Colonic mucosa (tissue), 4 donors: ENCODE measurements at regions of chr1 and their contacts with region 1.

Region 1: GRCh38 chr1:227357171-227357880 is 39.0 kb upstream of the CDC42BPA start:
- DNase-seq: peak; percentile 62
- H3K4me3 ChIP-seq: no peak overlapping the region
- H3K27ac ChIP-seq: peak overlapping the region; percentile 14
- H3K4me1 ChIP-seq: peaks cover 3% of the 10 kb centered on the region
- H3K27me3 ChIP-seq: no peaks in the 10 kb centered on the region
- CTCF ChIP-seq: no peak

Region 2: DNA sequence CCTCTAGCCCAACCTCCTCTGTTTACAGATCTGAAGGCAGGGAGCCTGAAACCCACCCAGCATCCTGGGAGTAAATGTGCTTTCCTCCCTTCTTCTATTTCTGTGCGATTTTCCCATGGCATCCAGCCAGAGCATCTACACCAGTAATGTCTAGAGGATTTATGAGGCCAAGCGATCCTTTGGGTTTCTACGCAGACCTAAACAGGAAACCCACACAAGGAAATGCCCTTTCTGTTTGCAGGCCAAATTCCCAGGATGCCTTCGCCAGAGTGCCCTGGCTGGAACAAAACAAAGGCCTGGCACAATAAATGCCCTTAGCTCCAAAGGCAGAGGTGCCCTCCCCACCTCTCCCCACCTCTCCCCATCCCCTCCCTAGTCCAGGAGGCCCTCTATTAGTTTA is 71.5 kb after region 1 on chr1:
- intact Hi-C with region 1: loop called (anchors 10 kb)
- DNase-seq: peak; percentile 72
- H3K4me3 ChIP-seq: no peak overlapping the region
- H3K27ac ChIP-seq: no peak overlapping the region
- H3K4me1 ChIP-seq: no peaks in the 10 kb centered on the region
- H3K27me3 ChIP-seq: no peaks in the 10 kb centered on the region
- CTCF ChIP-seq: no peak